GM10248 (cell line): ENCODE measurements at regions of chr7 and their contacts with region 1.

Region 1: DNA sequence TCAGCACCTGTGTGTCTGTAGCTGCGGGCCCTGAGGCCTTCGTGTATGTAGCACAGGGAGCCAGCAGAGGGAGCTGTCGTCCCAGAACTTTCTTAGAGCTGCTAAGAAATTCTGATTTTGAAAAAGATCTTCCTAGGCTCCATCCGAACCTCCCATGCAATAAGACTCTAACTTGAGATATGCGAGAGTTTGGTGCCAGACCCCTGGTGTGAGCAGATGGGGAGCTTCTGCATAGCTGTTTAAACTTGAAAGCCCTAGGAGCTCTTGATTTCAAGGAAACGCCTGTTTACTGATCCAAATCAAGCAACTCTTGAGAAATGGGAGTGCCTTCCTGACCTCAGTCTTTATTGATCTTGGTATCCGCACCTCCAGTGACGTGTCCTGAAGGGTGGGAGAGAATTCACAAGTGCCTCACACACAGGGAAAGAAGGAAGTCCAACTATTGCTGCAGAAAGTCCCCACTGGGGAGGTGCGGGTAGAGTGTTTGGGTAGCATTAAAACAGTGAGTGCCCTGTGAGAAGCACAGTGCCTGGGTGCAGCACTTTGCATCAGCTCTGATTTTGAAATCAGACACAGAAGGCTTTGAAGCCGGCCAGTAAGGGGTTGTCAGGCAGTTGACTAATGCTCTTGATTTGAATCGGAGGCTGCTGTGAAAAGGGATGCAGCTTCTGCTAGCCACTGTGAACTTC is 66.4 kb upstream of the STRIP2 start:
- DNase-seq: peak; percentile 75
- CTCF ChIP-seq: peak; percentile 93

Region 2: GRCh38 chr7:129343099-129343700 is 24.6 kb before region 1 on chr7:
- CTCF ChIA-PET with region 1: interaction called, 67 read pairs
- POLR2A ChIA-PET with region 1: no interaction called
- DNase-seq: peak; percentile 44
- CTCF ChIP-seq: peak; percentile 70

Region 3: GRCh38 chr7:129401967-129402860 is 34.4 kb after region 1 on chr7:
- CTCF ChIA-PET with region 1: interaction called, 14 read pairs
- POLR2A ChIA-PET with region 1: no interaction called
- DNase-seq: peak; percentile 31
- CTCF ChIP-seq: peak; percentile 27

Region 4: GRCh38 chr7:129454249-129454551 is 86.4 kb after region 1 on chr7:
- CTCF ChIA-PET with region 1: interaction called, 11 read pairs
- POLR2A ChIA-PET with region 1: no interaction called
- DNase-seq: no peak
- CTCF ChIP-seq: no peak

Region 5: DNA sequence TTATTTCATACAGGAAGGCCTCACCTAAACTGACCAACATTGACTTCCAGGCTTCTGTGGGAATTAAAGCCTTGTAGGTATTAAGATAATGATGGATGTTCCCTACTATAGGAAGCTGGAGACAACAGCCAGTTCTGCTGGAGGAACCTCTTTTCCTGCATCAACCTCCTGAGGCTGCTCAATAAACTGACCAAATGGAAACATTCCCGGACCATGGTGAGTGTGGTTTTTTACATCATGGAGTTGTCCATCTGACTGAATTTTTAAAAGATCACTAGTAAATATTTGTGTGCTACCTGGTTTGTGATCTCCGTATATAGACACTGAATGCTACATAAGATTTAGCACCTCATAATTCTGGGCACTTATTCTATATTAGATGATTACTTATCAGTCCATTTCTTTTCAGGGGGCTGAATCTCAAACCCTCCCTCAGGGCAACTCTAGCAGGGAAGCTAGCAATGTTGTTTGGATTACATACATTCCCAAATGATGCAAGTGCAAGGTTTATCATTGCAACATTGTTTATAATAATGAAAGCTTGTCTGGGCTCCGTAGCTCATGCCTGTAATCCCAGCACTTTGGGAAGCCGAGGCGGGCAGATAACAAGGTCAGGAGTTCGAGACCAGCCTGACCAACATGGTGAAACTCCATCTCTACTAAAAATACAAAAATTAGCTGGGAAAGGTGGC is 113.0 kb after region 1 on chr7:
- CTCF ChIA-PET with region 1: interaction called, 10 read pairs
- POLR2A ChIA-PET with region 1: no interaction called
- DNase-seq: no peak
- CTCF ChIP-seq: no peak

Region 6: DNA sequence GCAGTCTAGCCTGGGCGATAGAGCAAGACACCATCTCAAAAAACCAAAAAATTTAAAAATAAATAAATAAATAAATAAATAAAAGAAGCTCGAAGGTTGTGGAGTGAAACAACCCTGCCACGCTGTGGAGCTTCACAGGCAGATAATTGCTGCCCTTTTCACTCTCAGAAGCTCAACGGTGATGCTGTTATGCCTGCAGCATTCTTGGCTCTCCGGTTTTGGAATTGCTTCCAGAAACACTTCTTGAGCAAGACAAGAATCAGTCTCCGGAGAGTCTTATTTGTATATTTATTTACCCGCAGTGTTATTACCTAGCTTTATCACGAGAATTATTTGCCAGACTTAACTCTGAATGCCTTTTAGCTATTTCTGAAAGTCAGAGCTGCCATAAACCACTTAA is 625.4 kb after region 1 on chr7:
- CTCF ChIA-PET with region 1: no interaction called
- POLR2A ChIA-PET with region 1: no interaction called
- DNase-seq: no peak
- CTCF ChIP-seq: no peak

Region 7: GRCh38 chr7:130010689-130011412 is 643.0 kb after region 1 on chr7:
- CTCF ChIA-PET with region 1: interaction called, 25 read pairs
- POLR2A ChIA-PET with region 1: no interaction called
- DNase-seq: peak; percentile 84
- CTCF ChIP-seq: peak; percentile 84